GM10248 (cell line): ENCODE measurements at regions of chr22 and their contacts with region 1.

Region 1: GRCh38 chr22:30591588-30592359 is at the start of gene PES1:
- DNase-seq: peak; percentile 98
- CTCF ChIP-seq: no peak

Region 2: DNA sequence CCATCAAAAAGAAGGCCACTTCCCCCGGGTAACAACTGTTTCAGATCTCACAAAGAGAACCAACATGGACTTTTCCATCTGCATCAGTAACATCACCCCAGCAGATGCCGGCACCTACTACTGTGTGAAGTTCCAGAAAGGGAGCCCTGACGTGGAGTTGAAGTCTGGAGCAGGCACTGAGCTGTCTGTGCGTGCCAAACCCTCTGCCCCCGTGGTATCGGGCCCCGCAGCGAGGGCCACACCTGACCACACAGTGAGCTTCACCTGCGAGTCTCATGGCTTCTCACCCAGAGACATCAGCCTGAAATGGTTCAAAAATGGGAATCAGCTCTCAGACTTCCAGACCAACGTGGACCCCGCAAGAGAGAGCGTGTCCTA is 49.0 kb before region 1 on chr22:
- CTCF ChIA-PET with region 1: no interaction called
- POLR2A ChIA-PET with region 1: no interaction called
- DNase-seq: no peak
- CTCF ChIP-seq: no peak

Region 3: GRCh38 chr22:30574997-30575671 is 16.6 kb before region 1 on chr22:
- CTCF ChIA-PET with region 1: no interaction called
- POLR2A ChIA-PET with region 1: no interaction called
- DNase-seq: no peak
- CTCF ChIP-seq: no peak

Region 4: DNA sequence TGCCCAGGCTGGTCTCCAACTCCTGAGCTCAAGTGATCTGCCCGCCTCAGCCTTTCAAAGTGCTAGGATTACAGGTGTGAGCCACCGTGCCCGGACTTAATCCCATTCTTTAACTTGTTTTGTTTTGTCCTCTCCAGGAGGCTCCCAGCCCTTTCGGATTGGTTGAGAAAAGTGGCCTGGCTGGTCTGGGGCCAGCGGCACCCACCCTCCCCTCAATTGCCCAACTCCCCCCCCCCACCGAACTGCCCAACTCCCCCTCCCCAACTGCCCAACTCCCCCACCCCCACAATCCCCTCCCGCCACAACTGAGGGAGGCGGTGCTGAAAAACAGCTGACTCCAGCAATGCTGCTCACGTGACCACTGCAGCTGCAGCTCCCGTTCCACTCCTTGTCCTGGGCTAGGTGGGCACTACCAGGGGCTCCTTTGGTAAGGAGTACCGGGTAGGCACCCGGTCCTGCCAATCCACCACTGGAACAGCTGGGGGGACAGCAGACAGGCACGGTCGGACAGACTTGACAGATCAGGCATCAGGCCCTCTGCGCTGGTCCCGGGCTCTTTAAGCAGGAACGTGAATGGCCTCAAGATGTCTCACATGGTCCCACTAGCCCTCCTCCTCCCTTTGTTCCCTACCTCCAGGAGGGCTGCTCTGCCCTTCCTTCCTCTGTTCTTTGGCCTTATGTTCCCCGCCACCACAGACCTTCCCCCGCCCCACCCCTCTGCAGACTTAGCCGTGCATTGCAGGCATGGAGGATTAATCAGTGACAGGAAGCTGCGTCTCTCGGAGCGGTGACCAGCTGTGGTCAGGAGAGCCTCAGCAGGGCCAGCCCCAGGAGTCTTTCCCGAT is 14.9 kb after region 1 on chr22 and contains the start of gene TCN2:
- CTCF ChIA-PET with region 1: interaction called, 34 read pairs
- POLR2A ChIA-PET with region 1: no interaction called
- DNase-seq: peak; percentile 73
- CTCF ChIP-seq: no peak

Region 5: DNA sequence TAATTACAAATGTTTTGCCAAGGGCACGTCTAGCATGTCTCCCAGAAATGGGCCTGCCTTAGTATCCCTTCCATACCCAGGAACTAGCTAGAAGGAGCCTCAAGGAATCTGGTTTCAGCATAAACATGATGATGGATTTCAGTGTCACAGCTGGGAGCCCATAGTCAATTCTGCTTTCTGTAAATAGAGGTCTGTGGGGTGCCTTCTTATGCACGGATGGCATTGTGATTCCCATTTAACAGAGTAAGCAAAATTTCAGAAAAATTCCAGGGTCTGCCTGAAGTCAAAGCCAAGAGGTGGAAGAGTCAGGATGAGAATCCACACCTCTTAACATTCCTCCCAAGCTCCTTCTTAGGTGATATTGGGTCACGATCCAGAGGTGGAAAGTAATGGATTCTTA is 63.8 kb after region 1 on chr22:
- CTCF ChIA-PET with region 1: no interaction called
- POLR2A ChIA-PET with region 1: no interaction called
- DNase-seq: no peak
- CTCF ChIP-seq: no peak

Region 6: GRCh38 chr22:30777587-30777986 is 185.8 kb after region 1 on chr22:
- CTCF ChIA-PET with region 1: no interaction called
- POLR2A ChIA-PET with region 1: no interaction called
- DNase-seq: no peak
- CTCF ChIP-seq: no peak